Transverse colon (tissue), 4 donors: ENCODE measurements at regions of chr4 and their contacts with region 1.

Region 1: GRCh38 chr4:6287017-6287788 is 17.6 kb downstream of the WFS1 start:
- DNase-seq: no peak
- H3K4me3 ChIP-seq: no peak overlapping the region
- H3K27ac ChIP-seq: no peak overlapping the region
- H3K4me1 ChIP-seq: peaks cover 0 to 9% (median 2%) of the 10 kb centered on the region in 4 donors
- H3K27me3 ChIP-seq: no peaks in the 10 kb centered on the region
- CTCF ChIP-seq: no peak
- EP300 ChIP-seq: no peak
- POLR2A ChIP-seq: no peak

Region 2: DNA sequence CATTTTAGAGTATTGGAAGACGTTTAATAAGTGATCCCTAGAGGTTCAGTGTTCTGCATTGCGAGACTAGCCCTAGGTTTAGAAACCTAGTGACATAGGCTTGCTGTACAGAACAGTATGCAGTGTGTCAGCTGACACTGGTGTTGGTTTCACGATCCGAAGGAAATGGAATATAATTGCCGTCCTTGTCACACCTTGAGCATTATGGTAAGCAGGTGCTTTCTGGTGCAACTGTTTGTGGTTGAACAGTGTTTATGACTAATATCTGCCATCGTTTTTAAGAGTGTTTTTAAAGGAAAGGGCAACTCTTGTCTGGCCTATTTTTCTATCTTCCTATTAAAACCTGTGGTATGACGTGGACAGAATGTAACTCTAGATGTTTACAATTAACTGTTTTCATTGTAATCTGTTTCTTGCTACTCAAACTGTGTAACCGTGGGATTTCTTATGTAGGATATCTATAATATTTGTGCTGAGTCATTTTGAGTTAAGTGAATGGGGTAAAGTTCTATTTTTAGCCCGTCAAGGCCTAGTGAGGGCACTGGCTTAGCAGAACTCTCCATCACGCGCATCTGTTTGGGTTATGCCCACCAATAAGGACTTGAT is 568.6 kb after region 1 on chr4:
- in situ Hi-C with region 1: no loop called
- intact Hi-C with region 1: loop called (anchors 5 kb)
- DNase-seq: no peak
- H3K4me3 ChIP-seq: no peak overlapping the region
- H3K27ac ChIP-seq: peak overlapping the region; percentile 19 to 40 (median 31)
- H3K4me1 ChIP-seq: peaks cover 0 to 14% (median 0%) of the 10 kb centered on the region in 4 donors
- H3K27me3 ChIP-seq: no peaks in the 10 kb centered on the region
- CTCF ChIP-seq: no peak
- EP300 ChIP-seq: no peak
- POLR2A ChIP-seq: no peak